Activated CD4-positive, alpha-beta memory T cell treated with anti-CD3 and anti-CD28 coated beads for 36 hours (primary cell): ENCODE measurements at regions of chr17 and their contacts with region 1.

Region 1: GRCh38 chr17:51461578-51462004 is 201.2 kb downstream of the UTP18 start:
- DNase-seq: peak; percentile 72
- H3K4me3 Mint-ChIP-seq: no peak overlapping the region
- H3K27ac Mint-ChIP-seq: no peak overlapping the region
- H3K4me1 Mint-ChIP-seq: no peaks in the 10 kb centered on the region
- H3K27me3 Mint-ChIP-seq: no peaks in the 10 kb centered on the region

Region 2: DNA sequence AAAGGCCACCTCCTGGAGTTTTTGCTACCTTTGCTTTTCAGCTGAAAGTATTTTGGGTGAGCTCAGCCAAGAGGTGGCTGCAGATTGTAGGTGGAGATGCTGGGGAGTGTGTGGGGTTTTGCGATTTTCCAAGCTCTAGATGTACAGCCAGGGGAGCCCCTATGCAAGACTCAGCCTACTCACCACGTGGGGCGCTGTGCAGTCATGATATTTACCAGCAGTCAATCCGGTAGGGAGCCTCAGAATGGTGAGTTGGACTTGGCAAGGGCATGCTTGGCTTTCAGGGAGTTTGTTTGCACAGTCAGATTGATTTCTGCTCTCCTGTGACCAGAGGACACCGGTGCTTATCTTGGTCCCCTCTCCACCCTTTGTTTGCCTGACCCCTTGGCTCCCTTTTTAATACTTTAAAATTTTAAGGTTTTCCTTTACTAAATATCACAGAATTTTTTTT is 25.9 kb before region 1 on chr17:
- CTCF ChIA-PET with region 1: interaction called, 19 read pairs
- POLR2A ChIA-PET with region 1: interaction called, 3 read pairs
- intact Hi-C with region 1: loop called (anchors 1 kb)
- DNase-seq: peak; percentile 80
- H3K4me3 Mint-ChIP-seq: peak overlapping the region; percentile 58
- H3K27ac Mint-ChIP-seq: peak overlapping the region; percentile 79
- H3K4me1 Mint-ChIP-seq: peaks cover 45% of the 10 kb centered on the region
- H3K27me3 Mint-ChIP-seq: no peaks in the 10 kb centered on the region

Region 3: GRCh38 chr17:51472670-51473205 is 11.1 kb after region 1 on chr17:
- CTCF ChIA-PET with region 1: interaction called, 31 read pairs
- POLR2A ChIA-PET with region 1: no interaction called
- intact Hi-C with region 1: no loop called
- DNase-seq: no peak
- H3K4me3 Mint-ChIP-seq: no peak overlapping the region
- H3K27ac Mint-ChIP-seq: no peak overlapping the region
- H3K4me1 Mint-ChIP-seq: no peaks in the 10 kb centered on the region
- H3K27me3 Mint-ChIP-seq: peaks cover 2% of the 10 kb centered on the region